WTC11 (cell line): ENCODE measurements at regions of chr15 and their contacts with region 1.

Region 1: DNA sequence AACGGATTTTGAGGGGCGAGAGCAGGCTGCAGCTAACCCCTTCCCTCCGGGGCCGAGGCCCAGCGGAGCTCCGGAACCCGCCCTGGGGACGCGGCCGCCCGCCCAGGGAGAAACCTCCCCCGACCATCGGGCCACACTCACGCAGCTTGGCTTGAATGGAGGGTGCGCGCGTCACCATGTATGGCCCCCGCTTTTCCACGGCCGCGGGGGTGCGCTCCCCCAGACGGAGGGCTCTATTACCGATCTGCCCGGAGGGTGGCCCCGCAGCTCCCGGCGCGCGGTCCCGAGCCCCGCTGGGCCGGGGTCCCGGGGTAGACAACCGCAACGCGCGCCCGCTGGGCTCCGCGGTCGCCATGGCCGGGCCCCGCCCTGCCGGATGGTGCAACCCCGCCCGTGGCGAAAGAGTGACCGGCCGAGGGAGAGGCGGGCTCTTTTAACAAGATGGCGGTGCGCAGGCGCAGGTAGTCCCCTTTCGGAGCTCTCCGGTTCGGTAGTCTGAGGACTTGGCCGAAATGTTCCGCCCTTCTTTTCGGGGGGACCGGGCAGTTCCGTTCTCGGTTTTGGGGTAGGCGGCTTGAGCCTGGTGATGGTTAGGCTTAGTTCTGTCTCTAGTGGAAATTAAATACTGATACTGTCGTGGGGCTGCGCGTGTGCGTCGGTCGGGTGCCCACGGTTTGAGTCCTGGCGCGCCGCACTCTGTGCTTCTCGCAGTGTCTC is at the start of gene FAM219B:
- DNase-seq: peak; percentile 93
- ATAC-seq: peak; percentile 90
- H3K4me3 Mint-ChIP-seq: peak within 1 kb of the TSS; percentile 94
- H3K27ac Mint-ChIP-seq: peak within 1 kb of the TSS; percentile 94
- H3K4me1 Mint-ChIP-seq: peaks cover 15% of the 10 kb centered on the region
- H3K27me3 Mint-ChIP-seq: no peaks in the 10 kb centered on the region
- CTCF ChIP-seq: no peak
- total RNA-seq, gene FAM219B: 67.3 to 99.6 TPM (median 87.8 TPM) in 3 replicates

Region 2: GRCh38 chr15:74615508-74616365 is 290.9 kb before region 1 on chr15 and contains the start of gene CLK3:
- CTCF ChIA-PET with region 1: no interaction called
- POLR2A ChIA-PET with region 1: interaction called, 14 read pairs
- DNase-seq: peak; percentile 99
- ATAC-seq: peak; percentile 92
- H3K4me3 Mint-ChIP-seq: peak within 1 kb of the TSS; percentile 86
- H3K27ac Mint-ChIP-seq: peak within 1 kb of the TSS; percentile 95
- H3K4me1 Mint-ChIP-seq: peaks cover 17% of the 10 kb centered on the region
- H3K27me3 Mint-ChIP-seq: peaks cover 22% of the 10 kb centered on the region
- CTCF ChIP-seq: no peak
- total RNA-seq, gene CLK3: 45.2 to 48.1 TPM (median 46.3 TPM) in 3 replicates

Region 3: GRCh38 chr15:74816808-74817674 is 89.6 kb before region 1 on chr15:
- CTCF ChIA-PET with region 1: interaction called, 11 read pairs
- POLR2A ChIA-PET with region 1: no interaction called
- DNase-seq: no peak
- ATAC-seq: peak; percentile 61
- H3K4me3 Mint-ChIP-seq: no peak overlapping the region
- H3K27ac Mint-ChIP-seq: peak overlapping the region; percentile 79
- H3K4me1 Mint-ChIP-seq: peaks cover 20% of the 10 kb centered on the region
- H3K27me3 Mint-ChIP-seq: no peaks in the 10 kb centered on the region; the same call in 1 of the 2 replicates
- CTCF ChIP-seq: no peak

Region 4: DNA sequence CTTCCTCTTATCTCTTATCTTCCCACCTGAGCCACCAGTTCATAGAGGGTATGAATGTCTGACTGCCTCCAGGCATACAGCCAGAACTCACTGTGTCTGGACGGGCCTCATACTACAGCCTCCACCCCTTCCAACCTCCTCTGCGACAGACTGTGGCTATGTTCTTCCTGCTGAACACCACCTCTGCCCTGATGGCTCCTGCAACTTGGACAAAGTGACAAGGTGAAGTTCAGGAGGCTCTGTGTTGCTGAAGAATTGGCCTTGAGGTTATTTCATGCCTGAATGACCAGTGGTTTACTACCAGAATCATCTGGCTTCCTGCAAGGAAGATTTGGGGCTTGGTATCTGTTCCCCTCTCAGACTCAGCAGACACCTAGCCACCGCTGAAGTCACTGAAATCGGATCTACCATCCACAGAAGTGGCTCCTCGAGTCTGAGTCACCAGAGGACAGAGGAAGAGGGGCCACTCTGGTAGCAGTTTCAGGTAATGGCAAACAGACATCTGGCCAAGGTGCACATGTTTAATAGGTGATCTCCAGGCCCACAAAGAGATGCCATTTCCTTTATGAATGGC is 49.4 kb before region 1 on chr15:
- CTCF ChIA-PET with region 1: interaction called, 12 read pairs
- POLR2A ChIA-PET with region 1: no interaction called
- DNase-seq: no peak
- ATAC-seq: no peak
- H3K4me3 Mint-ChIP-seq: no peak overlapping the region
- H3K27ac Mint-ChIP-seq: no peak overlapping the region; the same call in 1 of the 2 replicates
- H3K4me1 Mint-ChIP-seq: no peaks in the 10 kb centered on the region
- H3K27me3 Mint-ChIP-seq: no peaks in the 10 kb centered on the region
- CTCF ChIP-seq: no peak

Region 5: DNA sequence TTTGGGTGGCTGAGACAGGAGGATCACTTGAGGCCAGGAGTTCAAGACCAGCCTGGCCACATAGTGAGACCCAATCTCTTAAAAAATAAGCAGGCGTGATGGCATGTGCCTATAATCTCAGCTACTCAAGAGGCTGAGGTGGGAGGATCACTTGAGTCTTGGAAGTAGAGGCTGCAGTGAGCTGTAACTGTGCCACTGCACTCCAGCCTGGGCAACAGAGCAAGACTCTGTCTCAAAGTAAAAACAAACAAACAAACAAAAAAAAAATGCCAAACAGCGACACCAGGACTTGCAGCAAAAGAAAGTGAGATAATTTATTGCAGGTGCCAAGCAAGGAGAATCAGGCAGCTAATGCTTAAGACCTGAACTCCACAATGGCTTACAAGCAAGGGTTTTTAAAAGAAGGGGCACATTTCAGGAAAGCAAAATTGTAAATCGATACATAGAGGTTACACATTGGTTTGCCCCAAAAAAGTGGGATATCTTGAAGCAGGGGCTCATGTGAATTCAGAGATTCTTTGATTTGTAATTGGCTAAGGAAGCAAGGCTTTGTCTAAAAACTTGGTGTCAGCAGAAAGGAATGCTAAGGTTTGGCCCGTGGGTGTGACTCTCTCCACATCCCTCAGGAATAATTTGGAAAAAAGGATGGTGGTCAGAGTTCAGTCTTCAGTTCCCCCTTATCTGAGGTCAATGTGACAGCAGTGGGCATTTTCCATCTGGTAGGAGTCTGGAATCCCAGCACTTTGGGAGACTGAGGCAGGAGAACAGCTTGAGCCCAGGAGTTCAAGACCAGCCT is 22.0 kb before region 1 on chr15:
- CTCF ChIA-PET with region 1: interaction called, 45 read pairs
- POLR2A ChIA-PET with region 1: interaction called, 5 read pairs
- DNase-seq: no peak
- ATAC-seq: no peak
- H3K4me3 Mint-ChIP-seq: no peak overlapping the region
- H3K27ac Mint-ChIP-seq: no peak overlapping the region
- H3K4me1 Mint-ChIP-seq: peaks cover 14% of the 10 kb centered on the region
- H3K27me3 Mint-ChIP-seq: peaks cover 8% of the 10 kb centered on the region
- CTCF ChIP-seq: no peak

Region 6: DNA sequence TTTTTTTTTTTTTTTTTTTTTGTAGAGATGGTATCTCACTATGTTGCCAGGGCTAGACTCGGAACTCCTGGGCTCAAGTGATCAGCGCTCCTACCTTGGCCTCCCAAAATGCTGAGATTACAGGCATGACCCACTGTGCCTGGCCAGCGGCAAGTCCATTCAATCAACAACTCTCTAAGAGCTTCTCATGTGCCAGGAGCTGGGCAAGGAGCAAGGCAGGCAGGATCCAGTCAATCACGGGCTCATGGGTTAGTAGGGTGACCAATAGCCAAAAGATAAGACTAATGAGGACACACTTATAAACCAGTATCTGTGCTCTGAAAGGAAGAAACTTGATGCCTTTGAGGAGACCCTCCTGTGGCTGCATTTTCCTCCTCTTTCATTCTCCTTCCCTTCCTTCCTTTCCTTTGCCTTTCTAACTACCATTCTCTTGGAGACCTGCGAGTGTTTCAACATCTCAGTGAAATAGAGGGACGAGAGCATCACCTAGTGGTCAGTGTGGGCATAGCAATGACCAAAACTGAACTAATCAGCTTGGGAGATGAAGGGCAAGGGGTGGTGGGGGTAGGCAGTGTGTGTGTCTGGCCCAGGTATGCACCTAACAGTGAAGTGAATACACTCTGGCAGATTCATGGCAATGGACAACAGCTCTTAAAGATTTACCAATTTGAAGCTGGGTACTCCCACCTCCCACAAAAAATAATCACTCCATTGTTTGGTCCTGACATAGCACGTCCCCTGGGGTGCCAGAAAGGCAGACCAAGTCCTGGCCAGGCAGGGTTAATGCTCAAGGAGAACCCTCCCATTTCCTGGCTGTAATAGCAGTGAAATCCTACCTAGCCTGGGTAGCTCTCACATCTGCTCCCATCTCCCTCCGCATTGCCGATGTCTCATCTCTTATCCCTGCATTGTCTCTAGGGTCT is 43.7 kb after region 1 on chr15:
- CTCF ChIA-PET with region 1: interaction called, 37 read pairs
- POLR2A ChIA-PET with region 1: no interaction called
- DNase-seq: peak; percentile 94
- ATAC-seq: peak; percentile 79
- H3K4me3 Mint-ChIP-seq: no peak overlapping the region
- H3K27ac Mint-ChIP-seq: peak overlapping the region; percentile 36
- H3K4me1 Mint-ChIP-seq: peaks cover 37% of the 10 kb centered on the region
- H3K27me3 Mint-ChIP-seq: peaks cover 6% of the 10 kb centered on the region
- CTCF ChIP-seq: peak; percentile 95

Region 7: GRCh38 chr15:75178171-75179075 is 271.8 kb after region 1 on chr15:
- CTCF ChIA-PET with region 1: no interaction called
- POLR2A ChIA-PET with region 1: no interaction called
- DNase-seq: peak; percentile 62
- ATAC-seq: peak; percentile 57
- H3K4me3 Mint-ChIP-seq: peak overlapping the region; percentile 64
- H3K27ac Mint-ChIP-seq: no peak overlapping the region
- H3K4me1 Mint-ChIP-seq: peaks cover 44% of the 10 kb centered on the region
- H3K27me3 Mint-ChIP-seq: peaks cover 27% of the 10 kb centered on the region
- CTCF ChIP-seq: no peak